Panc1 (cell line): ENCODE measurements at regions of chr2 and their contacts with region 1.

Region 1: GRCh38 chr2:136015699-136016098 is 30.3 kb upstream of the DARS1 start:
- DNase-seq: no peak
- ATAC-seq: no peak
- H3K4me3 ChIP-seq: no peak overlapping the region
- H3K27ac ChIP-seq: no peak overlapping the region
- H3K4me1 ChIP-seq: no peaks in the 10 kb centered on the region
- H3K27me3 ChIP-seq: peaks cover 6% of the 10 kb centered on the region; the same call in 1 of the 2 replicates
- CTCF ChIP-seq: no peak

Region 2: DNA sequence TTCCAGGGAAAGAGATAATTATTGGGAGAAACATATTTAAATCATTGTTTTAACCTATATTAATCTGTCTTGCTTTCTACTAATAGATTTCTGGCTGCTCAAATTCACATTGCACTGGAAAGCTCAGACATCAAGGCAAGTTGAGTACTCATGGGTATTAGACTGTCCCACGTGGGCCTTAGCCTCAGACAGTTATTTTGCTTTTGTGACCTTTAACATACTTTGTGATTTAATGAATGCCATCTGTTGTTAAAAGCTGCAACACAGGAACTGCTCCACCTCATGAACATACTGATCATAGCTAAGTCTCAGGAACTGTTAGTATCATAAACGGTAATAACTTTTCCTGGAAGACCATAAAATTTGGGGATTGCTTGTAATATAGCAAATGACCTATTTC is 176.0 kb before region 1 on chr2:
- CTCF ChIA-PET with region 1: no interaction called
- POLR2A ChIA-PET with region 1: no interaction called
- in situ Hi-C with region 1: no loop called
- intact Hi-C with region 1: no loop called
- DNase-seq: no peak
- ATAC-seq: no peak
- H3K4me3 ChIP-seq: no peak overlapping the region
- H3K27ac ChIP-seq: no peak overlapping the region
- H3K4me1 ChIP-seq: no peaks in the 10 kb centered on the region; the same call in 1 of the 2 replicates
- H3K27me3 ChIP-seq: no peaks in the 10 kb centered on the region
- CTCF ChIP-seq: no peak

Region 3: GRCh38 chr2:136004965-136005364 is 10.7 kb before region 1 on chr2:
- CTCF ChIA-PET with region 1: no interaction called
- POLR2A ChIA-PET with region 1: interaction called, 16 read pairs
- in situ Hi-C with region 1: no loop called
- intact Hi-C with region 1: no loop called
- DNase-seq: no peak
- ATAC-seq: no peak
- H3K4me3 ChIP-seq: no peak overlapping the region
- H3K27ac ChIP-seq: no peak overlapping the region
- H3K4me1 ChIP-seq: no peaks in the 10 kb centered on the region
- H3K27me3 ChIP-seq: no peaks in the 10 kb centered on the region
- CTCF ChIP-seq: no peak

Region 4: GRCh38 chr2:136045835-136046570 is 30.3 kb after region 1 on chr2:
- CTCF ChIA-PET with region 1: no interaction called
- POLR2A ChIA-PET with region 1: no interaction called
- in situ Hi-C with region 1: no loop called
- intact Hi-C with region 1: loop called (anchors 1 kb)
- DNase-seq: no peak
- ATAC-seq: no peak
- H3K4me3 ChIP-seq: no peak overlapping the region
- H3K27ac ChIP-seq: no peak overlapping the region
- H3K4me1 ChIP-seq: no peaks in the 10 kb centered on the region
- H3K27me3 ChIP-seq: no peaks in the 10 kb centered on the region; the same call in 1 of the 2 replicates
- CTCF ChIP-seq: no peak